ENCODE measurements at regions of chr12 and their contacts with region 1.

Region 1: GRCh38 chr12:96047229-96048211 is 12.1 kb upstream of the LTA4H start:
- DNase-seq: peak; percentile 29
- H3K4me3 Mint-ChIP-seq: peak overlapping the region; percentile 54
- H3K27ac Mint-ChIP-seq: peak overlapping the region; percentile 84
- H3K4me1 Mint-ChIP-seq: peaks cover 52% of the 10 kb centered on the region
- H3K27me3 Mint-ChIP-seq: no peaks in the 10 kb centered on the region

Region 2: GRCh38 chr12:95986635-95987570 is 60.6 kb before region 1 on chr12:
- CTCF ChIA-PET with region 1: no interaction called
- intact Hi-C with region 1: no loop called
- DNase-seq: no peak
- H3K4me3 Mint-ChIP-seq: no peak overlapping the region
- H3K27ac Mint-ChIP-seq: no peak overlapping the region
- H3K4me1 Mint-ChIP-seq: no peaks in the 10 kb centered on the region
- H3K27me3 Mint-ChIP-seq: no peaks in the 10 kb centered on the region

Region 3: DNA sequence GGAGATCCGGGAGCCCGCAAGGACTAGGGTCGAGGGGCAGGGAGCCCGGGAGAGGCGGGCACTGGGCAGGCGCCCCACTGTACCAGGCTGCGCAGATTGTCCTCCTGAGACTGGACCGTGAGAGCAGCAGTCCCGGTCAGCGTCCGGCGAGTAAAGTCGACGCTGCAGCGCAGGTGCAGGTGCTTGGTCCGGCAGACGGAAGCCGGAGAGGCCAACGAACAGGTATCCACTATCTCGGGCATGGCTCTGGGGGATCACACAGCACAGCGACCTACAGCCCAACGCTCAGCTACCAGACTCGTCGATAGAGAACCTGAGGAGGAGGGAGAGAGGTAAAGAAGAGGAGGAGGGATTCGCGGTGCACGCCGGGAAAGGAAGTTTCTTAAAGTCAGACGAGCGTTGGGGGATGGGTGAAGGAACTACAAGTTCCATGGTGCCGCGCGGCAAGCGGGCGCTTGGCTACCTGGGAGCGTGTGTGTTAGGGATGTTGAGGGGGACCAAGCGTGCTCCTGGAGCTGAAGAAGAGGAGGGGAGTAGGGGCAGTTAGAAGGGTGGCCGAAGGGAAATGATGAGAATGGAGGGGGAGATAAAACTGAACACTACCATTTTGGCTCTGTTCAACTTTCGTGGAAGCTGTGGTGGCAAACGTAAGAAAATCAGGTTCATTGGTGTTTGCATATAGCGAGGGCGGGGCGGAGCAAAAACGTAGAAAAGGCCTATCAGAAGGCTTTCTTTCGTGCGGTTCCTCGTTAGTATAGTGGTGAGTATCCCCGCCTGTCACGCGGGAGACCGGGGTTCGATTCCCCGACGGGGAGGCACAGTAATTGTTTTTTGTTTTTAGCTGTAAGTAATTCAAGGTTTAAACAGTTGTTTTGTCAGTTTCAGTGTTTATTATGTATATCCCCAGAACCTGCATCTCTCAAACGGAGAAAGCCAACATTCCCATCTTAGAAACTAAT is 12.0 kb before region 1 on chr12 and contains the start of gene LTA4H:
- CTCF ChIA-PET with region 1: interaction called, 4 read pairs
- intact Hi-C with region 1: loop called (anchors 1 kb)
- DNase-seq: peak; percentile 98
- H3K4me3 Mint-ChIP-seq: no peak within 1 kb of the TSS
- H3K27ac Mint-ChIP-seq: no peak within 1 kb of the TSS
- H3K4me1 Mint-ChIP-seq: peaks cover 19% of the 10 kb centered on the region
- H3K27me3 Mint-ChIP-seq: no peaks in the 10 kb centered on the region
- total RNA-seq, gene LTA4H: 125 TPM

Region 4: DNA sequence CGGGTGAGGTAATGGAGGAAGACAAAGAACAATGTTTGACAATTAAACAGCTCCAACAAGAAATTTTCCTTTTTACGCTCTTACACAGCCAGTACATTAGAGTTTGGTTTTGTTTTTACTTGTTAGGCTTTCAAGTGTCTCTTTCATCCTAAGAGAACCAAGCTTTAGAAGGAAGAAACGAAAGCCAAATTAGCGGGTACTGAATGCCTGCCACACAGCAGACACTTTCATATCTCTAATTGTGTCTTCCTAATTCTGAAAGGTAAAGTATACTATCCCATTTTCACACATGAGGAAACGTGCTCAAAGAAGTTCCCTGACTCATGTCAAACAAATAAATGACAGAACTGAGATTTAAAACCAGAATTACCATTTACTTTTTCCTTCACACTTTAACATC is 287.8 kb after region 1 on chr12:
- CTCF ChIA-PET with region 1: interaction called, 3 read pairs
- intact Hi-C with region 1: loop called (anchors 1 kb)
- DNase-seq: peak; percentile 34
- H3K4me3 Mint-ChIP-seq: no peak overlapping the region
- H3K27ac Mint-ChIP-seq: peak overlapping the region; percentile 65
- H3K4me1 Mint-ChIP-seq: peaks cover 39% of the 10 kb centered on the region
- H3K27me3 Mint-ChIP-seq: no peaks in the 10 kb centered on the region

Region 5: GRCh38 chr12:96434107-96434506 is 386.6 kb after region 1 on chr12:
- CTCF ChIA-PET with region 1: no interaction called
- intact Hi-C with region 1: loop called (anchors 2 kb)
- DNase-seq: peak; percentile 91
- H3K4me3 Mint-ChIP-seq: no peak overlapping the region
- H3K27ac Mint-ChIP-seq: peak overlapping the region; percentile 48
- H3K4me1 Mint-ChIP-seq: peaks cover 17% of the 10 kb centered on the region
- H3K27me3 Mint-ChIP-seq: no peaks in the 10 kb centered on the region

Region 6: GRCh38 chr12:96501139-96501761 is 453.7 kb after region 1 on chr12:
- CTCF ChIA-PET with region 1: no interaction called
- intact Hi-C with region 1: loop called (anchors 1 kb)
- DNase-seq: peak; percentile 44
- H3K4me3 Mint-ChIP-seq: no peak overlapping the region
- H3K27ac Mint-ChIP-seq: peak overlapping the region; percentile 74
- H3K4me1 Mint-ChIP-seq: peaks cover 31% of the 10 kb centered on the region
- H3K27me3 Mint-ChIP-seq: no peaks in the 10 kb centered on the region

Measured in activated naive CD4-positive, alpha-beta T cell treated with anti-CD3 and anti-CD28 coated beads for 36 hours (primary cell).